BJ (cell line): ENCODE measurements at regions of chr5 and their contacts with region 1.

Region 1: GRCh38 chr5:141234109-141234667 is 11.0 kb upstream of the PCDHB15 start:
- DNase-seq: no peak
- H3K4me3 ChIP-seq: peak overlapping the region; percentile 25
- H3K27me3 ChIP-seq: no peaks in the 10 kb centered on the region
- CTCF ChIP-seq: peak; percentile 28; the same call in 1 of the 2 replicates

Region 2: DNA sequence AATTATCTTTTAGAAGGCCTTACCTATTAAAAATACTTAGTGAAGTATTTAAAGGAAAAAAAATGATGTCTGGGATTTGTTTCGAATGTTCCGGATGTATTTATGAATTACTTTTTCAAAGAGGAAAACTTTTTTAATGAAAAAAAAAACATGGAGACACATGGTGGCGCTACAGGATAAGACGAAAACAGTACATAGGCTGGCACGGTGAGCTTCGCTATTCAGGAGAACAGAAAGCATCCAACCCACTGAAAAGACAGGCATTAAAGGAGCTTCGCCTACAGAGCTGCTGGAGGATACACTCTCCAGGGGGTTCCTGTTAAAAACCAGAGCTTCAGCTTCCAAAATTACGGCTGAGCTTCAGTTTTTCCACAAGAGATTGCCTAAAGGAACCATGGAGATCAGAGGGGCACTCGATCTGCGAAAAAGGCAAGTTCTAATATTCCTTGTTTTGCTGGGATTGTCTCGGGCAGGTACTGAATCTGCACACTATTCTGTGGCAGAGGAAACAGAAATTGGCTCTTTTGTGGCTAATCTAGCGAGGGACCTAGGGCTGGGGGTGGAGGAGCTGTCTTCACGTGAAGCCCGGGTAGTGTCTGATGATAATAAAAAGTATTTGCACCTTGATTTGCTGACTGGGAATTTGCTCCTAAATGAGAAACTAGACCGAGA is 10.9 kb before region 1 on chr5 and contains the start of gene PCDHB14:
- CTCF ChIA-PET with region 1: interaction called, 15 read pairs
- POLR2A ChIA-PET with region 1: no interaction called
- DNase-seq: no peak
- H3K4me3 ChIP-seq: peak within 1 kb of the TSS; percentile 27
- H3K27me3 ChIP-seq: no peaks in the 10 kb centered on the region
- CTCF ChIP-seq: 0 out of 2 replicates have a peak, but pooled peaks have one; percentile 21
- polyA plus RNA-seq, gene PCDHB14: 0.42 and 0.47 TPM in 2 replicates